Mammary epithelial cell (primary cell): ENCODE measurements at regions of chr1 and their contacts with region 1.

Region 1: GRCh38 chr1:202255343-202255742 is 61.7 kb downstream of the LGR6 start:
- DNase-seq: no peak
- H3K4me3 ChIP-seq: no peak overlapping the region
- H3K27ac ChIP-seq: no peak overlapping the region
- H3K4me1 ChIP-seq: no peaks in the 10 kb centered on the region
- H3K27me3 ChIP-seq: no peaks in the 10 kb centered on the region
- CTCF ChIP-seq: no peak

Region 2: DNA sequence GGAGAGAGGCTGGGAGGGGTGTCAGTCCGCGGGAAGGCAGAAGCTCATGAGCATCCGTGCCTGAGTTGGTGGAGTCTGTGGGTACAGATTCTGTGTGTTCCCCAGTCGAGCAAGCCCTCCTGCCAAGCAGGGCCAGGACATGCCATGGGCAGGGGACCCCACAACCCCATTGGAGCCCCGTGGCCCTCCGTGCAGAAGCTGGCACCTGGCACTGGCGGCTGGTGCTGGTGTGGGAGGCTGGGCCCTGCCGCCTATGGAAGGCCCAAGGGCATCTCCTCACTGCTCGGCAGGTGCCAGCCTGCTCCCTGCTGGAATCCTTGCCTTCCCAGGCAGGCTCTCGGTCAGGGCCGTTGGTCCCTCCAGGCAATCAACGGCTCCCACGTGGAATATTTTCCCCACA is 12.7 kb after region 1 on chr1:
- CTCF ChIA-PET with region 1: no interaction called
- dilution Hi-C with region 1: no loop called
- in situ Hi-C with region 1: no loop called
- intact Hi-C with region 1: loop called (anchors 2 kb)
- DNase-seq: no peak
- H3K4me3 ChIP-seq: no peak overlapping the region
- H3K27ac ChIP-seq: no peak overlapping the region
- H3K4me1 ChIP-seq: no peaks in the 10 kb centered on the region
- H3K27me3 ChIP-seq: peaks cover 7% of the 10 kb centered on the region
- CTCF ChIP-seq: peak in 1 of 2 donors; percentile 30